BJ (cell line): ENCODE measurements at regions of chr2 and their contacts with region 1.

Region 1: GRCh38 chr2:201735486-201735885 is 37.0 kb upstream of the MPP4 start:
- DNase-seq: no peak
- H3K4me3 ChIP-seq: no peak overlapping the region
- H3K27me3 ChIP-seq: no peaks in the 10 kb centered on the region
- CTCF ChIP-seq: no peak

Region 2: DNA sequence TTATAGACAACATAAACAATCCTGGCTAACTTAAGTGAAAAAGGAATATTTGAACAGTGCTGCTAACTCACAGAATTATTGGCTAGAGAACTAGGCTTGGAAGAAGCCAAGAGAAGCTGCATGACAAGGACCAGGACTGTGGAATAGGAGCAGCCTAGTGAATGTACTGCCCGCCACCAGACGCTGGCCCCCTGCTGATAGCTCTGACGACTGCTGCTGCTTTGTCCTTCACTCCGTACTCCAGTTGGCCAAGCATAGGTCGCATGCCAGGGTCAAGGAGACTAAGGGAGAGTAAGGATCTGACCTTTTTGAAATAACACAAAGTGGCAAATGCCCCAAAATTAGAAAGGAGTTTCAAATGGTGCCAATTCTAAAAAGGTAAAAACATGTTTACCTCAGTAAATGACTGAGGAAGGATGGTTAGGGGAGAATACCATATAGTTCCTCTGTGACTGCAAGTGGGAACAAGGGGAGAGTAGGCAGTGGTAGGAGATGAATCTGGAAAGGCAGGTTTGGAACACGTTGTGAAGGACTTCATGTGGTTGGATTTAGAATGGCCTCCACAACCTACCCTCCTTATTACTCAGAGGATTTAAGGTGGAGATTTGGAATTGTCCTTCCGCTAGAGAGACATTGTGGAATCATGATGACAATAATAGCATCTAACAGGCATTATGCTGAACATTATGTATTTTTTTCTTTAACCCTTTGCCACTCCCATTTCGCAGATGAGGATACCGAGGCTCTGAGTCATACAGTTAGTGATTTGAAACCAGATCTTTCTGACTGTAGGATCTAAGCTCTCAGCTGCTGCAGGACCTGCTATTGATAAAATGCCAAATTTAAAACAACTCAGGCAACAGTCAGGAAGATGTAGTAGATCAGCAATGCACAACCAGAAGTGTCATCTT is 264.4 kb before region 1 on chr2:
- CTCF ChIA-PET with region 1: no interaction called
- POLR2A ChIA-PET with region 1: interaction called, 22 read pairs
- DNase-seq: no peak
- H3K4me3 ChIP-seq: no peak overlapping the region
- H3K27me3 ChIP-seq: no peaks in the 10 kb centered on the region
- CTCF ChIP-seq: no peak

Region 3: DNA sequence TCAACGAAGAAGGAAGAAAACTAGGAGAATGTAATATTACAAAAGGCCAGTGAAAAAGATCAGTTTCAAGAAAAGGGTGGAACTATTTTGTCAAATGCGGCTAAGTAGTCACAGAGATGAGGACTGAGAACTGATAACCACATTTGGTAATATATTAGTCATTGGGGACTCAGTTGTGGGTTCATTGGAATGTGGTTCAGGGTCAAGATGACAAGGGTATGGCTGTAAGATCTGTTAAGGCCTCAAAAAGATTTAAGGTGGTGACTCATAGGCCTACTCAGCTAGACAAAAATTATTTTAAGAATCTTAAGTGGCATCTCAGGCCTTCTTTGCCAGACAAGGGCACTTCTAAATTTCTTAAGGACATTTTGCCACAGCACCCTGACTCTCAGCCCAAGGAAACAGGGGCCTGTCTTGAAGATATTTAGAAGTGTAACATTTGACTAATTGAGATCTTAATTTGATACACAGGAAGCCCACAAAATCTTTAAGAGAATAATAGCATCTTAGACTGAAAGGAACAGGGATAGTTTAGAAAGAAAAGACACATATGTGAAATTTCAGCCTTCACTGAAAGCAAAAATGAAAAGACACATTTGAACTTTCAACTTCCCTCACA is 202.7 kb before region 1 on chr2:
- CTCF ChIA-PET with region 1: no interaction called
- POLR2A ChIA-PET with region 1: no interaction called
- DNase-seq: peak; percentile 77
- H3K4me3 ChIP-seq: no peak overlapping the region
- H3K27me3 ChIP-seq: no peaks in the 10 kb centered on the region
- CTCF ChIP-seq: no peak